ENCODE measurements at regions of chr12 and their contacts with region 1.

Region 1: GRCh38 chr12:118135788-118136558 is at the start of gene PEBP1:
- DNase-seq: peak; percentile 84
- ATAC-seq: peak; percentile 99
- H3K4me3 ChIP-seq: peak within 1 kb of the TSS; percentile 78
- H3K27ac ChIP-seq: peak within 1 kb of the TSS; percentile 42
- H3K4me1 ChIP-seq: peaks cover 2% of the 10 kb centered on the region; the same call in 1 of the 2 replicates
- H3K27me3 ChIP-seq: no peaks in the 10 kb centered on the region
- CTCF ChIP-seq: no peak
- POLR2A ChIP-seq: peak; percentile 67; the same call in 1 of the 2 replicates
- RAD21 ChIP-seq: no peak
- total RNA-seq, gene PEBP1: 129 and 137 TPM in 2 replicates

Region 2: DNA sequence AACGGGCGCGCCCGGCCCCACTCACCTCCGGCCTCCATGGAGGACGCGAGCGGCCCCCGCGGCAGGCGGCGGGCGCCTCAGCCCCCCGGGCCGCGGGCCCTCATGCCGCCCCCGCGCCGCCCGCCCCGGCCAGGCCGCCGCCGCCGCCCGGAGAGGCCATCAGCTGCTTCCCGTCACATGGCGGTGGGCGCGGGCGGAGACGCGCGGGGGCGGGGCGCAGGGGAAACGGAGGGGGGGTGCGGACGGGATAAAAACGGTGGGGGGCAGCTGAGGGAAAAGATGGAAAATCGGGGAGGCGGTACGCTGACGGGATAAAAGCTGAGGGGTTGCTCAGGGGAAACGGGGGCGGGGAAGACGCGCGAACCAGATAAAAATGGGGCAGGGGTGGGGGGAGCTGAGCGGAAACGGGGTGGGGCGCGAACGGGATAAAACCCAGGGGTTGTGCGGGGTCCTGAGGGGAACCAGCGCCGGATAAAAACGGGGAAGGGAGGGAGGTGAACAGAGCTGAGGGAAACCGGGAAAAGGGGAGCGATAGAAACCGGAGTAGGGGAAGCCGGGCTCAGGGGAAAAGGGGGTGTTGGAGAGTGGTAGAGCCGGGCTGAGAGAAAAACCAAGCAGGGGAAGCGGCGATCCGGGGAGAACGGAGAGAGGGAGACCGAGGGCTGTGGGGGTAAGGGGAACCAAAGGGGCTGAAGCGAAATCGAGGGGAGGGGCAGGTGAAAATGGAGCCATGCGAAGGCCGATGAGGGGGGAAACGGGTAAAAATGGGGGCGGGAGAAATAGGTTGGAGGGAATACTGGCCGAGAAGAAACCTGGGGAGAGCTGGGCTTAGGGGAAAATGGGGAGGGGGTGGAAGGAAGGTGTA is 74.7 kb before region 1 on chr12 and contains the start of gene WSB2:
- CTCF ChIA-PET with region 1: interaction called, 3 read pairs
- POLR2A ChIA-PET with region 1: interaction called, 16 read pairs
- dilution Hi-C with region 1: no loop called
- in situ Hi-C with region 1: no loop called
- intact Hi-C with region 1: loop called (anchors 5 kb)
- DNase-seq: peak; percentile 50
- ATAC-seq: peak; percentile 59
- H3K4me3 ChIP-seq: peak within 1 kb of the TSS; percentile 66
- H3K27ac ChIP-seq: peak within 1 kb of the TSS; percentile 98
- H3K4me1 ChIP-seq: peaks cover 7% of the 10 kb centered on the region
- H3K27me3 ChIP-seq: no peaks in the 10 kb centered on the region
- CTCF ChIP-seq: no peak
- POLR2A ChIP-seq: peak; percentile 68
- RAD21 ChIP-seq: no peak
- total RNA-seq, gene WSB2: 141 and 180 TPM in 2 replicates

Region 3: GRCh38 chr12:118237052-118237665 is 101.2 kb after region 1 on chr12:
- CTCF ChIA-PET with region 1: no interaction called
- POLR2A ChIA-PET with region 1: no interaction called
- dilution Hi-C with region 1: no loop called
- in situ Hi-C with region 1: no loop called
- intact Hi-C with region 1: no loop called
- DNase-seq: no peak
- ATAC-seq: no peak
- H3K4me3 ChIP-seq: no peak overlapping the region
- H3K27ac ChIP-seq: no peak overlapping the region
- H3K4me1 ChIP-seq: no peaks in the 10 kb centered on the region
- H3K27me3 ChIP-seq: no peaks in the 10 kb centered on the region
- CTCF ChIP-seq: no peak
- POLR2A ChIP-seq: no peak
- RAD21 ChIP-seq: no peak

Region 4: GRCh38 chr12:119667577-119668323 is 1531.8 kb after region 1 on chr12 and contains the start of gene PRKAB1:
- CTCF ChIA-PET with region 1: no interaction called
- POLR2A ChIA-PET with region 1: no interaction called
- dilution Hi-C with region 1: no loop called
- in situ Hi-C with region 1: no loop called
- intact Hi-C with region 1: loop called (anchors 5 kb)
- DNase-seq: peak; percentile 96
- ATAC-seq: peak; percentile 99
- H3K4me3 ChIP-seq: peak within 1 kb of the TSS; percentile 81
- H3K27ac ChIP-seq: peak within 1 kb of the TSS; percentile 80
- H3K4me1 ChIP-seq: no peaks in the 10 kb centered on the region
- H3K27me3 ChIP-seq: no peaks in the 10 kb centered on the region
- CTCF ChIP-seq: peak; percentile 96
- POLR2A ChIP-seq: peak; percentile 61
- RAD21 ChIP-seq: peak; percentile 60
- total RNA-seq, gene PRKAB1: 6.9 and 9.7 TPM in 2 replicates

Measured in IMR-90 (cell line).